ENCODE measurements at regions of chr5 and their contacts with region 1.

Region 1: DNA sequence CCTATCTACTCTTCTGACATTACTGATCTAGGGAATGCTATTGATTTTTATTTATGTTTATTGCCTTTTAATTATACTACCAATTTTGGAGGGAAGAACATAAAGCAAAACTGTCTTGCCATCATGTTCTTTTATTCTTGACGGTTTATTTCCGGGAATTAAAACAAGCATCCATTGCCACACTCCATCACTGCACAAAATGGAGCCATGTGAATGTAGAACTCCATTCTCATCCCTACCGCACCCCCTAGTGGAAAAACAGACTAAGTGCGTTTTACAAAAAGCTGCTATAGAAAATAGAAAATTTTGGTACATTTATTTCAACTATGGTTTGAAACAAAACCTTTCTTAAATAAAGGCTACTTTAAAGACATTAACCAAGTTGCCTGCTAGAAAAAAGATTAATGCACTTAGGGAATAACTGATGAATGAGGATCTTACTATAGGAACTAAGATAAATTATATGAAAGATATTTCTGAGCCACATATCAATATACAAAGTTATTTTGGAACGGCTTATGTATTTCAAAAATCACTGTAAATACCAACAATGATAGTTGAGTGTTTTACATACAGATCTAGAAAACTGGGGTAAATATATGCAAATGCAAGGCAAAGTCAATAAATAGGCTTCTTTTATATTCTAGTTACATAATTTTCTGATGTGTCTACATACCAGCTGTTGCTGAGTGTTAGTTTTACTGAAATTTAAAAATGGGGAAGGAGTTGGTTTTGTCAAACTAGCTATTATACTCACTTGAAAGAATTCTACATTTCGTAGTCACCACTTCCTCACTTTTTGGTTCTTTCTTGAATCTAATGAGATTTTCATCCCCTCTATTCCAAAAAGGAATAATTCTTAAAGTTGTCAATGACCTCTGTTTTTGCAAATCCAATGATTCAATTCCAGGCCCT is 26.5 kb downstream of the OXCT1 start:
- DNase-seq: no peak
- H3K4me3 ChIP-seq: no peak overlapping the region
- H3K27me3 ChIP-seq: no peaks in the 10 kb centered on the region
- CTCF ChIP-seq: peak; percentile 76

Region 2: DNA sequence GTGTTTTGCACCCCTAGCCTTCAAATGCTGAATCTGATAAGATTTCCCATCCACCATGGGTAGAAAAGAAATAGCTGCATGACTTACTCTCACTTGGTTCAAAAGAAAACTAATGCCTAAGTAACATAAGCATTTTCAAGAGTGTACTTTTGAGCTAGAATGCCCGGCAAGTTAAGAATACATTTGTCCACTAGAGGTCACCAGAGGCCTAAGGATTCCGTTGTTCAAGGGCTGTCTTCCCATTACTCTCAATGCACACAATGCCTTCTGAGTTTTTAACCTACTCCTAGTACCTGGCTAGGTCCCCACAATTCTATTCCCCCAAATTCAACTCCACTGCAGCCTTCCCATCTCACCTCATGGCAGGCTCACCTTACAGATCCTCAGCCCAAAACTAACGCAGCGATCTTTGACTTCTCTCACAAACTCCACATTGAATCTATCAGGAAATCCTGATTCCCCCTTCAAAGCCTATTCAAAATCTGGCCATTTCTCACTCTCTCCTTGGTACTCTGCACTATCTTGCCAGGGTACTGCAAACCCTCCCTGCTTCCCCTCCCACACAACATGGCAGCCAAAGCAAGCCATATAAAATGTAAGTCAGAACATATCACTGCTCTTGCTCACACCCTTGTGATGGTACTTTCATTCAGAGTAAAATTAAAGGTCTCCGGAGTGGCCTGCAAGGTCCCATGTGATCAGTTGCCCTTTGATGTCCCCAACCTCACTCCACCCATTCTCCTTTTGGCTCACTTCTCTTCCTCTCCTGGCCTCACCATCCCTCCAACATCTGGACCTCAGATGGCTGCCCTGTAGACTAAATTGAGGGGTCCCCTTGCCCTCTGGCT is 13.2 kb after region 1 on chr5:
- CTCF ChIA-PET with region 1: interaction called, 19 read pairs
- POLR2A ChIA-PET with region 1: no interaction called
- DNase-seq: no peak
- H3K4me3 ChIP-seq: no peak overlapping the region
- H3K27me3 ChIP-seq: no peaks in the 10 kb centered on the region
- CTCF ChIP-seq: peak; percentile 69